ENCODE measurements at regions of chr5 and their contacts with region 1.

Region 1: GRCh38 chr5:14644623-14645237 is 19.8 kb upstream of the OTULIN start:
- DNase-seq: no peak
- ATAC-seq: no peak
- H3K4me3 ChIP-seq: no peak overlapping the region
- H3K27ac ChIP-seq: no peak overlapping the region
- H3K4me1 ChIP-seq: no peaks in the 10 kb centered on the region
- CTCF ChIP-seq: no peak
- EP300 ChIP-seq: no peak
- POLR2A ChIP-seq: no peak
- RAD21 ChIP-seq: no peak

Region 2: GRCh38 chr5:13987843-13988464 is 656.8 kb before region 1 on chr5:
- CTCF ChIA-PET with region 1: interaction called, 16 read pairs
- POLR2A ChIA-PET with region 1: no interaction called
- DNase-seq: peak; percentile 71 to 74
- ATAC-seq: peak in 1 of 2 experiments; percentile 68; a peak in 3 of 6 replicates
- H3K4me3 ChIP-seq: no peak overlapping the region
- H3K27ac ChIP-seq: peak overlapping the region; percentile 56 to 61; a peak in 4 of 6 replicates
- H3K4me1 ChIP-seq: peaks cover 18% of the 10 kb centered on the region
- CTCF ChIP-seq: peak; percentile 97
- EP300 ChIP-seq: no peak
- POLR2A ChIP-seq: no peak
- RAD21 ChIP-seq: peak; percentile 97

Region 3: GRCh38 chr5:14357851-14358250 is 286.9 kb before region 1 on chr5:
- CTCF ChIA-PET with region 1: interaction called, 40 read pairs
- POLR2A ChIA-PET with region 1: no interaction called
- DNase-seq: no peak
- ATAC-seq: no peak
- H3K4me3 ChIP-seq: no peak overlapping the region
- H3K27ac ChIP-seq: no peak overlapping the region
- H3K4me1 ChIP-seq: no peaks in the 10 kb centered on the region
- CTCF ChIP-seq: no peak
- EP300 ChIP-seq: no peak
- POLR2A ChIP-seq: no peak
- RAD21 ChIP-seq: no peak

Region 4: DNA sequence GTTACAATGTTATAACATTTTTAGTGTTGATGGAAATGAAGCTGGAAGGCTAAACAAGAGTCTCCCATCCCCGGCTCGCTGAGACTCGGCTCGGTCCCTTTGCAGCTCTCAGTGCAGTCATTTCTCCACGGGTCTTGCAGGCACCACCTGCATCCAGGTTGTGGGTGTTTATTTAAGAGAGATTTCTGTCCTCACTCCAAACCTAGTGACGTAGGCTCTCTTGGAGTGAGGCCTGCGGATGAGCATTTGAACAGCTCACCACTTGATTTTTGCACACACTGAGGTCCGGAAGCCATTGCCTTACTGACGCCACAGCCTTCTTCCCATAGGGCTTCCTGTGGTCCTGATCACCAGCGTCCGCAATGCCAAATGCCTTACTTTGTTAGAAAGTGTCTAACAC is 260.8 kb before region 1 on chr5:
- CTCF ChIA-PET with region 1: interaction called, 12 read pairs
- POLR2A ChIA-PET with region 1: no interaction called
- DNase-seq: no peak
- ATAC-seq: no peak
- H3K4me3 ChIP-seq: no peak overlapping the region
- H3K27ac ChIP-seq: no peak overlapping the region
- H3K4me1 ChIP-seq: no peaks in the 10 kb centered on the region
- CTCF ChIP-seq: no peak
- EP300 ChIP-seq: no peak
- POLR2A ChIP-seq: no peak
- RAD21 ChIP-seq: no peak

Region 5: GRCh38 chr5:14469551-14470377 is 175.0 kb before region 1 on chr5:
- CTCF ChIA-PET with region 1: interaction called, 10 read pairs
- POLR2A ChIA-PET with region 1: no interaction called
- DNase-seq: no peak
- ATAC-seq: no peak
- H3K4me3 ChIP-seq: no peak overlapping the region
- H3K27ac ChIP-seq: no peak overlapping the region
- H3K4me1 ChIP-seq: no peaks in the 10 kb centered on the region; the same call in 2 of the 3 replicates
- CTCF ChIP-seq: no peak
- EP300 ChIP-seq: no peak
- POLR2A ChIP-seq: no peak
- RAD21 ChIP-seq: no peak

Region 6: DNA sequence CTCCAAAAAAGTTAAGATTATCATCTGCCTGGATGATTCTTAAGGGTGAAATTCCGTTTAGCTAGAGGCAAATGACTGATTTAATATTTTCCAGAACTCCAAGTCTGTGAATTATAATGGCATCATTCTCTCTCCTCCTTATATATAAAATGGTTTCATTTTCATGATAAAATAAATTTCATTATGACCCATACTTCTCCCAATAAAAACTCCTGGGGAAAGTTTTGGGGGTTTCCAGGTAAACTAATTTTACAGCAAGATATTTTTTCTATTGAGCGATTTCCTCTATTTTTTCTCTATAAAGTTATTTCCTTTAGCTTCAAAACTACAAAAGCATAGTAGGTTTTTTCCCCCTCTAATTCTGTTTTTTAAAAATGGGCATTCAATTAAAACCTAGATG is 12.2 kb after region 1 on chr5:
- CTCF ChIA-PET with region 1: interaction called, 32 read pairs
- POLR2A ChIA-PET with region 1: no interaction called
- DNase-seq: no peak
- ATAC-seq: no peak
- H3K4me3 ChIP-seq: no peak overlapping the region
- H3K27ac ChIP-seq: no peak overlapping the region
- H3K4me1 ChIP-seq: peaks cover 11% of the 10 kb centered on the region; the same call in 2 of the 3 replicates
- CTCF ChIP-seq: no peak
- EP300 ChIP-seq: no peak
- POLR2A ChIP-seq: no peak
- RAD21 ChIP-seq: no peak

Measured in A549 (cell line).